ENCODE measurements at regions of chr1 and their contacts with region 1.

Region 1: GRCh38 chr1:56821140-56821797 is 2.1 kb upstream of the FYB2 start:
- DNase-seq: peak; percentile 97
- ATAC-seq: peak; percentile 58
- H3K4me3 Mint-ChIP-seq: no peak overlapping the region
- H3K27ac Mint-ChIP-seq: no peak overlapping the region
- H3K4me1 Mint-ChIP-seq: peaks cover 33% of the 10 kb centered on the region
- H3K27me3 Mint-ChIP-seq: no peaks in the 10 kb centered on the region; the same call in 1 of the 2 replicates
- CTCF ChIP-seq: peak; percentile 94

Region 2: DNA sequence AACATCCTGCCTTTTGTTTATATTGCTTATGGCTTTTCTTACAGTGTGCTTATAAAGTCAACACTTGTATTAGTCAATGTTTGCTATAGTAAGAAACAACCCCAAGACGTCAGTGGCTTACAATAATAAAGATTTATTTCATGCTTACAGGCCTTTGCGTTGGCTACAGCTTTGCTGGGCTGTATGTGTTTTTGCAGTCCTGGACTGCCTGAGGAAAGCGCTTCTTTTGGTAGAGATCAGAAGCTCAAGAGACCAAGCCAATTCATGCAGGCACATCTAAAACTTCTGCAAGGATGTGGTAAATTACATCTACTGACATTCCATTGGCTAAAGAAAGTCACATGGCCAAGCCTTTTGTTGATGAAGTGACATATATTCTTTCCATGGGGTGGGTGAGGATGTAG is 193.6 kb before region 1 on chr1:
- CTCF ChIA-PET with region 1: no interaction called
- POLR2A ChIA-PET with region 1: no interaction called
- DNase-seq: no peak
- ATAC-seq: peak; percentile 47; the same call in 1 of the 2 replicates
- H3K4me3 Mint-ChIP-seq: no peak overlapping the region
- H3K27ac Mint-ChIP-seq: no peak overlapping the region
- H3K4me1 Mint-ChIP-seq: peaks cover 28% of the 10 kb centered on the region
- H3K27me3 Mint-ChIP-seq: no peaks in the 10 kb centered on the region
- CTCF ChIP-seq: no peak

Region 3: DNA sequence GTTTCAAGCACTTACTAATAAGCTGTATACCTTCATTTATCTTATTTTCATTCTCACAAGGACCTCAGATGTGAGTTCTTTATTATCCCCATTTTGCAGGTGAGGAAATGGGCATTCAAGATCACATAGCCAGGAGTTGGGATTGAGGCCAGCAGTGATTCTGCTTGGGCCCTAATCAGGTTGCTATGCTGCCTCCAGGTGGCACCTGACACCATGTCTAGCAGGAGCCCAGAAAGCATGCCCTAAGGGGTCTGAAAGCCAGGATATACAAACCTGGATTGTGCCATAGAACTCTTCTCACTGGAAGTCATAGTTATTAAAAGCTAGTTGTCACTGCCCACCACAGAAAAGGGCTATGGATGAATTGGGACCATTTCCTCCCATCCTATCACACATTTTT is 63.1 kb before region 1 on chr1:
- CTCF ChIA-PET with region 1: interaction called, 11 read pairs
- POLR2A ChIA-PET with region 1: no interaction called
- DNase-seq: peak; percentile 45
- ATAC-seq: peak; percentile 98
- H3K4me3 Mint-ChIP-seq: no peak overlapping the region
- H3K27ac Mint-ChIP-seq: no peak overlapping the region
- H3K4me1 Mint-ChIP-seq: no peaks in the 10 kb centered on the region
- H3K27me3 Mint-ChIP-seq: no peaks in the 10 kb centered on the region
- CTCF ChIP-seq: no peak

Region 4: DNA sequence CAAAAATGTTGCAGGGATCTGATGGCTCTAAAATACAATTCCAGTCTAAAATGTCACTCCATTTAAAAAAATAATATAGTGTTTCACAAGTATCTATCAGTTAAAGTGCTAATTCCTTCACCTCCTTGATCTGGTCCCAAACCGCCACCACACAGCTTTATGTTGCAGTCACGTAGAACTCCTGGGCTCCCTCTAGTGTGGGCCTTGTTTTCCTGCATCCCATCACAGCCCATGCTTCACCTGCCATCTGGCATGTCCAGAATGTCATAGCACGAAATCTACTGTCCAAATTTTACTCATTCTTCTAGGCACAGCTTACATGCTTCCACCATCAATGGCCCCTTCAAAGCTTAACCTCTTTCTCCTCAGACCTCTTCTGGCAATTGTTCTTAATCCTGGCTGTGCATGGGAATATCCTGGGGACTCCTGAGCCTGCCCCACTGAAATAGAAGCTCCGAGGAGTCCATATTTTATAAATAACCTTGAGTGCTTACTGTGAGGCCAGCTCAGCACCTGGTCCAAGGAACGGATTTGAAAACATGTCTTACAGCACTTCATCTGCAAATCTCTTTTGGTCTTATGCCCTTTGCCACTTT is 17.6 kb before region 1 on chr1:
- CTCF ChIA-PET with region 1: interaction called, 45 read pairs
- POLR2A ChIA-PET with region 1: no interaction called
- DNase-seq: peak; percentile 71
- ATAC-seq: peak; percentile 98
- H3K4me3 Mint-ChIP-seq: no peak overlapping the region
- H3K27ac Mint-ChIP-seq: no peak overlapping the region
- H3K4me1 Mint-ChIP-seq: no peaks in the 10 kb centered on the region
- H3K27me3 Mint-ChIP-seq: no peaks in the 10 kb centered on the region
- CTCF ChIP-seq: peak; percentile 36; the same call in 1 of the 2 replicates

Region 5: DNA sequence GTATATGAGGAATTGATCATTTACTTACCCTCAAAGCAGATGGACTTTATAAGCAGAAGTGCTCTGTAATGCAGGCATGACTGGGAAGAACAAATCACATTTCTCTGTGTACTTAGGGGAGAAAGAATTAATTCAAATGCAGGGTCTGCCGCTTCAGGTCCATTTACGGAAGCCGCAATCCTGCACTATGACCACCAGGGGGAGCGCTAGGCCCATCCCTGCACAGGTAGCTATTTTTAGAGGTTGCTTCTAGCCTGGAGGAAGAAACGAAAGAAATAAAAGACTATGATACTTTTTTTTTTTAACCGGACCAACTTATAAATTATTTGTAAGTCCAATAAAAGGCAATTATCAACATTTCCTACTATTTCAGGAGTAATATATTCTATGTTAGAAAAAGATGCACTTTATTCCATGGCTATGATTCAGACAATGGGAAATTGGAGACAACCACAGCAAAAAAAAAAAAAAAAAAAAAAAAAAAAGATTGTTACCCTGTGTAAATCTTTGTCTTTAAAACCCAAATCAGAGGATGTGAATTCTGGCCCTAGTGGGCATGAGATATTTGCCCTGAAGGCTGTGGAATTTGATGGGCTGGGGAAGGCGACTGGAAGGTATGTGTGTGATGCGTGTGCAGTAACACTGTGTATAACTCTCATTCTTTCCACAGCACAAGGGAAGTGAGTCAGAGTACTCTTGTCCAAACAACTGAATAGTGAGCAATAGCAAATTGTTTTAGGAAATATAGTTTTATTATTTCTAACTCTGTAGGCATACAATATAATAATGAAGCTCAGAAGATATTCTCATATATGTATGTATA is 10.8 kb after region 1 on chr1:
- CTCF ChIA-PET with region 1: interaction called, 16 read pairs
- POLR2A ChIA-PET with region 1: no interaction called
- DNase-seq: peak; percentile 62
- ATAC-seq: peak; percentile 58; the same call in 1 of the 2 replicates
- H3K4me3 Mint-ChIP-seq: no peak overlapping the region
- H3K27ac Mint-ChIP-seq: no peak overlapping the region
- H3K4me1 Mint-ChIP-seq: peaks cover 3% of the 10 kb centered on the region
- H3K27me3 Mint-ChIP-seq: no peaks in the 10 kb centered on the region; the same call in none of the 2 replicates
- CTCF ChIP-seq: peak; percentile 93